Calu3 (cell line): ENCODE measurements at regions of chr5 and their contacts with region 1.

Region 1: DNA sequence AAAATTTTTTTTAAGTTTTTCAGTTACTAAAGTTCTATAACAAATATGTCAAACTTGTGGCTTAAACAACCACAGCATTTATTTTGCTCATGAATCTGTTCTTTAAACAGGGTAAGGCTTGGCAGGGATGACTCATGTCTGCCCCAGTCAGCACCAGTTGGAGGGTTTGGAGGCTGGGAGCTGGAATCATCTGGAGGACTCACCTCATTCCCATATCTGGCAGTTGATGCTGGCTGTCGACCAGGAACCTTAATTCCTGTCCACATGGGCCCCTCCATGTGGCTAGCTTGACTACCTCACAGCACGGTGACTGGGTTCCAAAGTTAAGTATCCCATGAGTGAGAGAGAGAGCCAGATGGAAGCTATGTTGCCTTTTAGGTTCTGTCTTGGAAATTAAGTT is 13.8 kb upstream of the CCL28 start:
- DNase-seq: peak; percentile 54
- H3K4me3 Mint-ChIP-seq: no peak overlapping the region
- H3K27ac Mint-ChIP-seq: peak overlapping the region; percentile 70
- H3K4me1 Mint-ChIP-seq: peaks cover 51% of the 10 kb centered on the region
- H3K27me3 Mint-ChIP-seq: no peaks in the 10 kb centered on the region
- CTCF ChIP-seq: no peak

Region 2: DNA sequence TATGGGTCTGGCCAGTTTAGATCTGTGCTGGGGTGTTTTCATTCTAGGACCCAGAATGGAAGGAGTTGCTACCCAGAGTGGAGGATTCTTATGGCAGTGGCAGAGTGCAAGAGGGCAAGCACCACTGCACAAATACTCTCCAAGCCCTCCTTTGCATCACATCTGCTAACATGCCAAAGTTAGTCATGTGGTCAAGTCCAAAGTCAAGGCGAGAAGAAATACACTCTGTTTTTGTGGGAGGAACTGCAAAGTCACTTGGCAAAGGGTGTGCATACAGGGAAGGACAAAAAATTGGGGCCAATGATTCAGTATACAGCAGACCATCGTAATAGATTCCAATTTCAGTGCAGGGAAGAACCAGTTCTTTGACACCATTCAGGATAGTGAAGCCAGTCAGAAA is 68.9 kb before region 1 on chr5:
- CTCF ChIA-PET with region 1: no interaction called
- intact Hi-C with region 1: no loop called
- DNase-seq: no peak
- H3K4me3 Mint-ChIP-seq: no peak overlapping the region
- H3K27ac Mint-ChIP-seq: no peak overlapping the region
- H3K4me1 Mint-ChIP-seq: peaks cover 8% of the 10 kb centered on the region
- H3K27me3 Mint-ChIP-seq: no peaks in the 10 kb centered on the region
- CTCF ChIP-seq: no peak

Region 3: GRCh38 chr5:43409809-43410271 is 16.1 kb before region 1 on chr5:
- CTCF ChIA-PET with region 1: interaction called, 3 read pairs
- intact Hi-C with region 1: loop called (anchors 2 kb)
- DNase-seq: no peak
- H3K4me3 Mint-ChIP-seq: no peak overlapping the region
- H3K27ac Mint-ChIP-seq: peak overlapping the region; percentile 13
- H3K4me1 Mint-ChIP-seq: peaks cover 34% of the 10 kb centered on the region
- H3K27me3 Mint-ChIP-seq: no peaks in the 10 kb centered on the region
- CTCF ChIP-seq: no peak